ENCODE measurements at regions of chr20 and their contacts with region 1.

Region 1: DNA sequence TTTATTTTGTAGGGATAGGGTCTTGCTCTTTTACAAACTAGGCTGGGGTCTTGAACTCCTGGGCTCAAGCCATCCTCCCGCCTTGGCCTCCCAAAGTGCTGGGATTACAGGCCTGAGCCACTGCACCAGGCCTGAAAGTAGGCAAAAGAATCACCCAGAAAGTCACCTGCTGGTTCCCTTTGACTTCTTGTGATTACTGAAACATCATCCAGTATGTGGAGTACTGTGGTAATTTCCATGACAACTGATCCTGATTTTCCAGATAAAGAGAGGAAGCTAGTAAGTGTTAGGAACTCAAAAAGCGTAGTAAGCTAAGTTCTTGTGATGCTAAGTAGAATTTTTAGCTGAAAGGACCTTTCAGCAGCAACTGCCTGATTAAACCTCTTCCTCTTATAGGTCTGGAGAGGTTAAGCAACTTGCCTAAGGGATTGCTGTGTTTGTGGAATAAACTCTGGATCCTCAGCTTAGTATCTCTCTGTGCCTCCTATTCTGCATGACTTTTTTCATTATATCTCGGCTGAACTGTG is 16.8 kb downstream of the RALY start:
- DNase-seq: no peak
- ATAC-seq: no peak
- H3K4me3 ChIP-seq: no peak overlapping the region
- H3K27ac ChIP-seq: no peak overlapping the region
- H3K4me1 ChIP-seq: peaks cover 21% of the 10 kb centered on the region
- H3K27me3 ChIP-seq: no peaks in the 10 kb centered on the region
- CTCF ChIP-seq: no peak
- EP300 ChIP-seq: no peak
- POLR2A ChIP-seq: no peak
- RAD21 ChIP-seq: no peak

Region 2: GRCh38 chr20:34022154-34022838 is 11.8 kb after region 1 on chr20:
- CTCF ChIA-PET with region 1: interaction called, 11 read pairs
- POLR2A ChIA-PET with region 1: no interaction called
- RAD21 ChIA-PET with region 1: no interaction called
- SMC1A ChIA-PET with region 1: interaction called, 8 read pairs
- in situ Hi-C with region 1: no loop called
- intact Hi-C with region 1: no loop called
- DNase-seq: peak; percentile 63
- ATAC-seq: peak; percentile 88
- H3K4me3 ChIP-seq: no peak overlapping the region
- H3K27ac ChIP-seq: peak overlapping the region; percentile 63
- H3K4me1 ChIP-seq: peaks cover 20% of the 10 kb centered on the region
- H3K27me3 ChIP-seq: no peaks in the 10 kb centered on the region
- CTCF ChIP-seq: peak; percentile 44 to 54 (median 48)
- EP300 ChIP-seq: 0 out of 4 replicates have a peak, but pooled peaks of 1 of the 2 experiments have one; percentile 10
- POLR2A ChIP-seq: no peak
- RAD21 ChIP-seq: peak; percentile 70

Region 3: GRCh38 chr20:34049897-34050695 is 39.6 kb after region 1 on chr20:
- CTCF ChIA-PET with region 1: no interaction called
- POLR2A ChIA-PET with region 1: no interaction called
- RAD21 ChIA-PET with region 1: no interaction called
- SMC1A ChIA-PET with region 1: no interaction called
- in situ Hi-C with region 1: no loop called
- intact Hi-C with region 1: no loop called
- DNase-seq: no peak
- ATAC-seq: no peak
- H3K4me3 ChIP-seq: no peak overlapping the region
- H3K27ac ChIP-seq: no peak overlapping the region
- H3K4me1 ChIP-seq: no peaks in the 10 kb centered on the region
- H3K27me3 ChIP-seq: no peaks in the 10 kb centered on the region
- CTCF ChIP-seq: no peak
- EP300 ChIP-seq: no peak
- POLR2A ChIP-seq: no peak
- RAD21 ChIP-seq: no peak